ENCODE measurements at regions of chr6 and their contacts with region 1.

Region 1: DNA sequence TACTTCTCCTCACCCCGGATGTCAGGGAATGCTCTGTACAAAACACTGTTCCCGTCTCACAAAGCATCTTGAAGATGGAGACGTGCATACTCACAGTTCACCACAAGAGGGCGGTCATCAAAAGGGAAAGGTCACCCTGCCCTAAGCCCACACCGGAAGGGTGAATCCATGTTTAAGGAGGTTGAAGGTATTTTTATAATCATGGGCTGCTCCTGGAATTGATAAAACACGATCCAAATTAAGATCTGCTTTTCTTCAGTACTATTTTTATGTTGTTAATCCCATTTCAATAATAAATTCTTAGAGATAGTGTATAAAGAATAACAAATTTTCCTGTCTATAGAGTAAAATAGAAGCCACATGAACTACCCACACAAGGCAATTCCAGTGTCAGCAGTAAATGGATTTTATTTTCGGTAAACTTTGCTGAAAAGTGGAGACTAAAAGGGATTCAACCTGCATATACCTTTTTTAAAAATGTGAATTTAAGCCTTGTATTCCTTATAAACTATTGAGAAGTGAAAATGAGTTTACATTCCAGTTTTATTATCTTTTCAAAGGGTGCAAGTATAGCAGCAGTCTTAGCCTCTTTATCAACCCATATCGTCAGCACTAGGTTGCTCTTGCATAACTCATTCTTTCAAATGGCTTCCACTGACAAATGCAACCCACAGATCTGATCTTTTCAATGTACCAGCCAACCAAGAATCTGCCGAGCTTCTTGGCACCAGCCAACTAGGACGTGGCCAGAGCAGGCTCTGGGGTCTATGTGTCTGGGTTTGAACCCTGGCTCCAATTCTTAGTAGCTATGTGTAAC is 79.7 kb upstream of the MBOAT1 start:
- DNase-seq: peak; percentile 66
- CTCF ChIP-seq: peak; percentile 74

Region 2: DNA sequence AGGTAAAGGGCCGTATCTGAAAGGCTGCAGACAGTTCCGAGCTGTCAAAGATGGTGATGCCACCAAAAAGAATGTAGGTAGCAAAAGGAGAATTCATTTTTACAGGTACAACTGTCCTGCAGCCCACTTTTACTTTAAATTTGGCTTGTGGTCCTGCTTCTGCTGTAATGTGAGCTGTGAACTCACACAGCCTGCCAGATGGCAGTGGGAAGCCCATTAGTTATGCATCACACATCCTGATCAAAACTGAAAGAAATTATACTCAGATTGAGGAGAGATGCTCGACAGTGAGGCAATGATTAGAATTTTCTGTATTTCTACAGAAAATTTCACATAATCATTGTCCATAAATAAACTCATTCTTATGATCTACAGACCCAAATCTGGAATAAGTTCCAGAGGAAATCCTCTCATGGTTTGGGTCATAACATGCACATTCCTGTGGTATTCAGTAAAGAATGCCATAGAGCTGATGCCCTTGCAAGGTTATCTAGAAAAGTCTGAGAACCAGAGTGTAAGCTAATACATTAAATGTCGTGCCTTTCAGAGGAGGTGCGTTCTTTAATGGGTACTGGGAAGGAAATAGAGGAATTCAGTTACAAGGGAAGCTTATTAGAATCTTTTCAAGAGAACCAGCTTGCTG is 85.8 kb after region 1 on chr6:
- CTCF ChIA-PET with region 1: no interaction called
- POLR2A ChIA-PET with region 1: no interaction called
- DNase-seq: no peak
- CTCF ChIP-seq: no peak

Region 3: DNA sequence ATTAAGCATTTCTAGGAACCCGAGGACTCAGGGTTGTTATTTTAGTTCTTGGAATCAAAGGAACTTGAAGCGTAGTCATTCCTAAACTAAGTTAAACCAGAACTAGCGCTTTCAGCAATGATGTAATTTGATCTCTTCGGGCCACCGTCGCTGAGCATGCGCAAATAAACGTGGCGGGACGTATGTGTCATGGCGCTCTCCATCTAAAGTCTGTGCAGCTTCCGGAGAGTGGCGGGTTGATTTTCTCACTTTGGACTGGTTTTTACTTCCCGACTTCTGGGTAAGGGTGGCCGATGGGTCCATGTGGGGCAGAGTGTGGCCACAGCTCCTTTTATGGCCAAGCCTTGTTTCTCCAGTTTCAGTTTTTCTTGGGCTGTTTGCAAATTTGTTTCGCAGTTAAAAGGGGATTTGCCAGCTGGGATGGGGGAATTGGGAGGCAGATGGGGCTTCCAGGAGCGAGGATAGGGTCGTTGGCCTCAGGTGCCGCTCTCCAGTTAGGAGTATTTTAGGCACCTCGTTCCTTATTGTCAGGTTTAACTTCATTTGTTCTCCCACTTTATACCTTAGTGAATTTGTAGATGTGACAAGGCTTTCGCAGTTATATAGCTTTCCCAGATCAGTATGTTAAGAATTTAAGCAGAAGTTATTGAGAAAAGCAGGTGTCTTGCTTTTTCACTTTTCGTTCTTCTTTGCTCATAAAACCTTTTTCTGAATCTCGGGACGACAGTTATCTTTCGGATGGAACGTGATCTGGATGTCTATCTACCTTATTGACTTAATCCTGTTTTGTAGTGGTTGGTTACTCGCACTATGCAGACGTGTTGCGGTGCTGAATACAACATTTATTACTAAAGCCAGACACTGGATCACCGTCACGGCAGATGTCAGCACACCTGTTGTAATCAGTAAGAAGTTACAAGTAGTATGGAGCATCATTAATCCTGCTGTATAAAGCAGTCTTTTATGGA is 242.6 kb after region 1 on chr6 and contains the start of gene CDKAL1:
- CTCF ChIA-PET with region 1: interaction called, 15 read pairs
- POLR2A ChIA-PET with region 1: no interaction called
- DNase-seq: peak; percentile 75
- CTCF ChIP-seq: no peak